Right ventricle myocardium inferior (tissue), 1 donor: ENCODE measurements at regions of chr13 and their contacts with region 1.

Region 1: DNA sequence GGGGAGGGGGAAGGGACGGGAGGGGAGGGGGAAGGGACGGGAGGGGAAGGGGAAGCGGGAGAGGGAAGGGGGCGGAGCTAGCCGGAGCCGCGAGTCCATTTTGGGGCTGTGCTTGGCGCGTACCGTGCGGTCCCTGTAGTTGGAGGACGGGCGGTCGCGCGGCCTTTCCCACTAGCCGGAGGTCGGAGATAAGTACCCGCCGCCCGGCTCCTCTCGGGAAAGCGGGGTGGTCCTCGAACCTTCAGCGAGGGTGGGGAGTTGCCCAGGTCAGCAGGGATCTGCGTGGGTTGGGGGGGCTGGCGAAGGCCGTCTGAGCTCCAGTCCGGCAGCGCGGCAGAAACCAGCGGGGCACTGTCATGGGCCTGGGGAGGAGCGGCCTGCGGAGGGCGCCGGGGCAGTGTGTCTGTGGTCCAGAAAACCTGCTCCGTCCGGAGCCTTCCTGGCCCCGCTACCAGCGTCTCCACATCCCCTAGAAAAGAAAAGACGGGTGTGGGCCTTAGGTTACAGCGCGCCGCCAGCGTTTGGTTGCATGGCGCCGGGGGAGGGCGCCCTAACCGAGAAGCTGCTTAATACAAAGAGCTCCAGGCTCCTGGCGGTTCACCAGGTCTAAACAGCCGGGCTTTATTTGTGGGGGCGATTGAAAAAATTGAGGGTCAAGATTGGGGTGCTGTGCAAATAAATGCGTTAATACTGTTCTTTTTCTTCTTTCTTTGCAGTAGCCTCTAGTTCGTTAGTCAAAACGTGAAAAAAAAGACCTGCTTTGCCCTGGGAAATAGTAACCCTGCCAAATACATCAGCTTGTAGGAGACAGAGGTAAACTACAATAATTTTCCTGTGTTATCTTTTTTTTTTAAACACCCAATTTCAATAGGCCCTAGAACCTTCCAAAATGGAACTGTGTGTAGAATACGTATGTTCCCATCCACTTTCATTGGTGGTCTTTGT is at the start of gene TRIM13:
- DNase-seq: peak; percentile 94
- ATAC-seq: peak; percentile 91
- total RNA-seq, gene TRIM13: 24.2 TPM

Region 2: DNA sequence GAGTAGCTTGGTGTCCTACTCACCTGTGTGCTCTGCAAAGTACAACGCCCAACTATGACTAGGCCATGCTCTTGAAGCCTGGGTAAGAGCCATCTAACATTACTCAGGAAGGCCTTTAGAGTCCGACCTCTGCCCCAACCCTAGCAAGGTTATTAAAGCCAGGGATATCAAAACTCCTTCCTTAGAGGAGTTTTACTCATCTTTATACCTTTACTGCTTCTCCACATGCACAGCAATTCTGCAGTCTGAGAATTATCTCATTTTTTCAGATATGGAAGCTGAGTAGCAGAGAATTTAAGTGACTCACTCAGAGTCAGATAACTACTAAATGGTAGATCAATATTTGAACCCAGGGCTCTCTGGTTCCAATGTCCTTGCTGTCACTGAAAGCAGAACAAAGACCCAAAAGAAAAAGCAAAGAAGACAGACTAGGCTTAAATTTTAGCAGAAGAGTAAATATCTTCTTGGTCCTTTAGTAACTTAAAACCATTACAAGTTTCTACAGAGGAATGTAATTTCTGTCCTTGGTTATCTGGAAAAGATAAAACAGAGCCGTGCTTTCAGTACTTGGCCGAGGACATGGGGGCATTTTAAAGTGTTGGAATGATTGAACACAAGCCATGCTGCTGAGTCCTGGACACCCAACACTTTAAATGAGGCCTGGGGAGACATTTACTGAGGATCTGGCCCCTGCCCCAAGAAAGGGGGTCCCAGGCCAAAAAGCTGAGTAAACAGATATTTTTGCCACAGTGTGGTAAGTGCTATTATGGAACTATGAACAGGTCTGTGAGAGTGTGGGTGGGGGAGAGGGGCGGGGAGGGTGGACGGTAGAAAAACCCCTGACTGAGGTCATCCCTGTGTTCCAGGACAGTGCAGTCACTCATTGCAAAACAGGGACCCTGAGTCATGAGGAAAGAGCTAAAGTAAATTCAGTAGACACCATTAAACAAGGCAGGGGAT is 186.4 kb before region 1 on chr13:
- intact Hi-C with region 1: no loop called
- DNase-seq: no peak
- ATAC-seq: peak; percentile 48

Region 3: DNA sequence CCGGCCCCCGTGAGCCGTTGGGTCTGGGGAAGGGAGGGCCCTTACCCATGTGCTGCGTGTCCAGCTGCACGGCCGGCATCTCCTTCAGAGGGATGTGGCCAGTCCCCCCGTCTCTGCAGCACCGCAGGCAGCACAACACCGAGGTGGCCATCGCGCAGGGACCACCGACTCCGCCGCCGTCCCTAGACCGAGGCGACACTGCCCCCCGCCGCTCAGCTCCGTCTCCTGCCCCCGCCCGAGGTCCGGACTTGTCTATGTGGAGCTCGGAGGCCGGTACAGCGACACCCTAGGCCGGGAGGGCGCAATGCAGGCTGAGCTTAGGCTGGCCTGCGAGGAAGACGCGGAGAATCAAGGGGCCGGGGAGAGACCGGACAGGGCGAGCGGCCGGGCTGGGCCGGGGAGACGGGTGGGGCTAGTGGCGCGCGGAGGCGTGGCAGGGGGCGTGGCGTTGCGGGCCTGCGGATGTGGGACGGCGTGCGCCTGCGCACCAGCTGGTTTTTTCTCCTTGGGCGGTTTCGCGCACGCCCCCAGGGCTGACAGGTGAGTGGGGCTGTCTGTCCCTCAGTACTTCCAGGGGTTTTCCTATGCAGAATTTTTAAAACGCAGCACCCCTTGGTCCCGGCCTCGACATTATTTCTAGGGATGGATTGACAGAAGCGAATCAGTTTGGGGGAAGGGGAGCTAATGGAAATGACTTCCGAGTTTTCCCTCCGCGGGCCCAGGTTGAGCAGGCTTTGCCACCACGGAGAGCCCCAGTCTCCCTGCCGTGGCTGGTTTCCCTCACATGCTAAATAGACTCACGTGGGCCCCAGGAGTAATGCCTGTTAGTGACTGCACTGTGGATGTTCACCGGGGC is 60.9 kb before region 1 on chr13 and contains the start of gene SPRYD7:
- intact Hi-C with region 1: loop called (anchors 1 kb)
- DNase-seq: peak; percentile 99
- ATAC-seq: peak; percentile 100
- total RNA-seq, gene SPRYD7: 11.4 TPM

Region 4: DNA sequence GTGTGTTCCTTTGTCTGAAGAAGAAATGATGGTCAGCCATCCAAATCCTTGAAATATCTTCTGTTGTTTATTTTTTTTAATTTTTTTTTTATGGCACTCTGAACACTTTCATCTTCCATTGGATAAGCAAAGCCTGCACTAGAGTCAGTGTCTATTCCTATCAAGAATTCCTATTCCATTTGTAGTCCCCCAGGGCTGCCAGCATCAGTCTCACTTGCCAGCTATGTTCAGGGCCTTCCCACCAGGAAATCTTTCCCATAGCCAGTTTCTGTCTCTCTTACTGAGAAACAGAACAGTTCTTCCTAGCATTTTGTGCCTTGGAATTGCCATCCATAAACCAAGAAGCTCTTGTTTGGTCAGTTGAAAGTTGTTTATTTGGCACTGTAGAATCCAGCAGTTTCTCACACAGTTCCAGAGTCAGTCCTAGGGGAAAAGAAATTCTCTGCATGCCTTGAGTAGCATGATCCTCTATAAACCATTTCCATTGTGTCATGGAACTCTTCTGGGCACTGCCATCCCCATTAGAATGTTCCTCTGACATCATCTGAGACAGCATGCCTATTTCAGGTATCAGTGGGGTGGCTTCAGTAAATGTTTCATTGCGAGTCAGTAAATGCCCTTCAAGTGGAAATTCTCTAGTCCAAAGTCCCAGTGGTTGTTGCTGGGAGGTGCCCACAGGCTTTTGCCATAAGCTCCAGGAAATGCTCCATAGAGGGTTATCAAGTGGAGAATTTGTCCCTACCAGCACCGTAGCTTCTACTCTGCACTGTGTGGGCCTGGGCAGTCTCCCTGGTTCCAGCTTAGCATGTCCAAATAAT is 42.3 kb before region 1 on chr13:
- intact Hi-C with region 1: no loop called
- DNase-seq: no peak
- ATAC-seq: no peak

Region 5: GRCh38 chr13:50026788-50027473 is 29.7 kb after region 1 on chr13:
- intact Hi-C with region 1: no loop called
- DNase-seq: no peak
- ATAC-seq: no peak

Region 6: GRCh38 chr13:50123862-50124536 is 126.8 kb after region 1 on chr13:
- intact Hi-C with region 1: loop called (anchors 2 kb)
- DNase-seq: no peak
- ATAC-seq: peak; percentile 92

Region 7: GRCh38 chr13:50220938-50221337 is 223.7 kb after region 1 on chr13:
- intact Hi-C with region 1: no loop called
- DNase-seq: no peak
- ATAC-seq: no peak